Activated CD4-positive, alpha-beta T cell treated with anti-CD3 and anti-CD28 coated beads for 36 hours (primary cell): ENCODE measurements at regions of chr2 and their contacts with region 1.

Region 1: DNA sequence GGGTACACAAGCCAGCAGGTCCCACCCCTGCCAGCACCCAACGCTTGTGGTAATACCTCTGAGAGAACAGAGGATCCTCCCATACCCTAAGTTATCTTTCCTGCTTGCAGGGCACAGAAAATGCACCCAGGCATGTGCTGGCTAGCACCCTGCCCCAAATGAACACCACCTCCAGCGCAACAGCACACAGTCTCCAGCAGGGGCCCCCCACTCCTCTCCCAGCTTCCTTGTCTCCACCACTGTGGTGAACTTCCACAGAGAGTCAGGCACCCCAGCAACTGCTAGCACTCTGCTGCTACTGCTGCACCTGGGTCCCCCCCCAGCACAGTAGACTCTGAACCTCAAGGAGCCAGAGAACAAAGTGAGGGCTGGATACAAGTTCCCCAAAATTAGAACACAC is 216.8 kb upstream of the CNTNAP5 start:
- DNase-seq: no peak
- ATAC-seq: no peak
- H3K4me3 Mint-ChIP-seq: no peak overlapping the region
- H3K27ac Mint-ChIP-seq: no peak overlapping the region
- H3K4me1 Mint-ChIP-seq: no peaks in the 10 kb centered on the region
- H3K27me3 Mint-ChIP-seq: no peaks in the 10 kb centered on the region

Region 2: GRCh38 chr2:123596621-123597020 is 211.6 kb before region 1 on chr2:
- CTCF ChIA-PET with region 1: no interaction called
- POLR2A ChIA-PET with region 1: no interaction called
- intact Hi-C with region 1: loop called in 1 of 2 experiments (anchors 5 kb)
- DNase-seq: no peak
- ATAC-seq: no peak
- H3K4me3 Mint-ChIP-seq: no peak overlapping the region
- H3K27ac Mint-ChIP-seq: no peak overlapping the region
- H3K4me1 Mint-ChIP-seq: no peaks in the 10 kb centered on the region
- H3K27me3 Mint-ChIP-seq: no peaks in the 10 kb centered on the region